A549 (cell line): ENCODE measurements at regions of chr20 and their contacts with region 1.

Region 1: GRCh38 chr20:1437235-1437904 is 29.3 kb downstream of the NSFL1C start:
- DNase-seq: peak; percentile 85 to 91
- ATAC-seq: peak; percentile 68 to 83; a peak in 4 of 6 replicates
- H3K4me3 ChIP-seq: no peak overlapping the region
- H3K27ac ChIP-seq: no peak overlapping the region
- H3K4me1 ChIP-seq: no peaks in the 10 kb centered on the region
- CTCF ChIP-seq: peak; percentile 96
- EP300 ChIP-seq: no peak
- POLR2A ChIP-seq: no peak
- RAD21 ChIP-seq: peak; percentile 86 to 90

Region 2: GRCh38 chr20:1212607-1213396 is 224.6 kb before region 1 on chr20:
- CTCF ChIA-PET with region 1: interaction called, 37 read pairs
- POLR2A ChIA-PET with region 1: no interaction called
- DNase-seq: peak; percentile 82 to 83
- ATAC-seq: peak; percentile 96 to 99
- H3K4me3 ChIP-seq: no peak overlapping the region
- H3K27ac ChIP-seq: no peak overlapping the region
- H3K4me1 ChIP-seq: no peaks in the 10 kb centered on the region
- CTCF ChIP-seq: peak; percentile 92
- EP300 ChIP-seq: no peak
- POLR2A ChIP-seq: no peak
- RAD21 ChIP-seq: peak; percentile 89 to 91

Region 3: DNA sequence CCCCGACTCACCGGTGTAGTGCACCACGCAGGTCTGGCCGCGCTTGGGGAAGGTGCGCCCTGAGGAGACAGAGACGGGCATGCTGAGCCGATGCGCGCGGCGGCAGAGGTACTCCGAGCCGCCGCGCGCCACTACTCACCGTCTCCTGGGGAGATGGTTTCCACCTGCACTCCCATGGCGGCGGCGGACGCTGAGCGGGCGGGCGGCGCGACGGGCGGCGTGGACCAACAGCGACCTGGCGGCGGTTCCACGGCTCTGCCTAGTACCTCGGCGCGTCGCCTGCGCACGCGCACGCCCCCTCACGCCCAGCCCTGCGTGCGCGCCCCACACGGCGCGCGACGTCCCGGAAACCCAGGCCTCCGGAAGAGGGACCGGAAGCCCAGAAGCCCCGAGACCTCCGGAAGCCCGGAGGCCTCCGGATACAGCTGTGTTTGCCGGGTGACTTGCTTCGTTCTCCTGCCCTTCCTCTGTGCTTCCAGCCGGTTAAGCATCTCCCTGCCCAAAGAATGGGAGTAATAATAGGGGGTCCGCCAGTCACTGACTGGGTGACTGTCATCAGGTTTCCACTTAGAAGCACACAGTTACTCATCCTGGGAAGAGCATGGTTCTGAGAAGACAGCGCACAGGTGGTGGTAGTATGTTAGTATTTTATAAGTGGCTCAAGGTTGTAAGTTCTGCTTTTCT is 44.4 kb before region 1 on chr20 and contains the start of gene FKBP1A:
- CTCF ChIA-PET with region 1: interaction called, 10 read pairs
- POLR2A ChIA-PET with region 1: no interaction called
- DNase-seq: peak; percentile 91
- ATAC-seq: peak; percentile 96 to 98
- H3K4me3 ChIP-seq: peak within 1 kb of the TSS; percentile 96
- H3K27ac ChIP-seq: peak within 1 kb of the TSS; percentile 89 to 95
- H3K4me1 ChIP-seq: peaks cover 27% of the 10 kb centered on the region; the same call in 2 of the 3 replicates
- CTCF ChIP-seq: no peak
- EP300 ChIP-seq: no peak
- POLR2A ChIP-seq: peak; percentile 91
- RAD21 ChIP-seq: 0 out of 5 replicates have a peak, but pooled peaks of 1 of the 2 experiments have one; percentile 8
- polyA plus RNA-seq, gene FKBP1A: 535 and 848 TPM in 2 replicates

Region 4: DNA sequence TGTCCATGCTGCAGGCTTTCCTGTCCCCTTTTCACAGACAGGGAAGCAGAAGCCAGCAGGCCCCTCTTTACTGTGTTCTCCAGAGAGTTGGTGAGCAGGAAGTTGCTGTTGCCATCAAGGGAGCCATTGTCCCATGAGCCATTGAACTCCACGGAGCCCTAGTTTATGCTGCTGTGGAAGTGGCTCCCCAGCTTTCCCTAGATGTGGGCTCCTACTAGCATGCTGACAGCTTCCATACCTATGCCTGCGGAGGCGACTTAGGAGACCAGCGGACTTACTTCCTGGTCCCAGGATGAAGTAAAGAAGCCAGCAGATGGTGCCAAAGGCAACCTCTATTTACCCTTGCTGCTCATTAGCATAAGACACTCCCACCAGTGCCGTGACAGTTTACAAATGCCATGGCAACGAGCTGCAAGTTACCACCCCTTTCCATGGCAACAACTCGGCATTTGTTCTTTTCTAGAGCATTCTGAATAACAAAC is 13.7 kb before region 1 on chr20:
- CTCF ChIA-PET with region 1: interaction called, 72 read pairs
- POLR2A ChIA-PET with region 1: no interaction called
- DNase-seq: peak in 1 of 2 experiments; percentile 78
- ATAC-seq: peak in 1 of 2 experiments; percentile 78; a peak in 3 of 6 replicates
- H3K4me3 ChIP-seq: no peak overlapping the region
- H3K27ac ChIP-seq: no peak overlapping the region
- H3K4me1 ChIP-seq: no peaks in the 10 kb centered on the region
- CTCF ChIP-seq: 0 out of 3 replicates have a peak, but pooled peaks have one; percentile 11
- EP300 ChIP-seq: no peak
- POLR2A ChIP-seq: no peak
- RAD21 ChIP-seq: no peak

Region 5: GRCh38 chr20:1466211-1467081 is 29.1 kb after region 1 on chr20 and contains the start of gene NSFL1C:
- CTCF ChIA-PET with region 1: interaction called, 54 read pairs
- POLR2A ChIA-PET with region 1: no interaction called
- DNase-seq: peak; percentile 96 to 97
- ATAC-seq: peak; percentile 80 to 93
- H3K4me3 ChIP-seq: peak within 1 kb of the TSS; percentile 97
- H3K27ac ChIP-seq: peak within 1 kb of the TSS; percentile 95 to 97
- H3K4me1 ChIP-seq: peaks cover 37% of the 10 kb centered on the region
- CTCF ChIP-seq: peak; percentile 97
- EP300 ChIP-seq: no peak
- POLR2A ChIP-seq: peak; percentile 85
- RAD21 ChIP-seq: peak in 1 of 2 experiments; percentile 69; a peak in 4 of 5 replicates
- polyA plus RNA-seq, gene NSFL1C: 53.2 and 56.6 TPM in 2 replicates

Region 6: GRCh38 chr20:1595333-1595732 is 158.0 kb after region 1 on chr20:
- CTCF ChIA-PET with region 1: no interaction called
- POLR2A ChIA-PET with region 1: no interaction called
- DNase-seq: no peak
- ATAC-seq: no peak
- H3K4me3 ChIP-seq: no peak overlapping the region
- H3K27ac ChIP-seq: no peak overlapping the region
- H3K4me1 ChIP-seq: no peaks in the 10 kb centered on the region
- CTCF ChIP-seq: no peak
- EP300 ChIP-seq: no peak
- POLR2A ChIP-seq: no peak
- RAD21 ChIP-seq: no peak